GM10248 (cell line): ENCODE measurements at regions of chr3 and their contacts with region 1.

Region 1: DNA sequence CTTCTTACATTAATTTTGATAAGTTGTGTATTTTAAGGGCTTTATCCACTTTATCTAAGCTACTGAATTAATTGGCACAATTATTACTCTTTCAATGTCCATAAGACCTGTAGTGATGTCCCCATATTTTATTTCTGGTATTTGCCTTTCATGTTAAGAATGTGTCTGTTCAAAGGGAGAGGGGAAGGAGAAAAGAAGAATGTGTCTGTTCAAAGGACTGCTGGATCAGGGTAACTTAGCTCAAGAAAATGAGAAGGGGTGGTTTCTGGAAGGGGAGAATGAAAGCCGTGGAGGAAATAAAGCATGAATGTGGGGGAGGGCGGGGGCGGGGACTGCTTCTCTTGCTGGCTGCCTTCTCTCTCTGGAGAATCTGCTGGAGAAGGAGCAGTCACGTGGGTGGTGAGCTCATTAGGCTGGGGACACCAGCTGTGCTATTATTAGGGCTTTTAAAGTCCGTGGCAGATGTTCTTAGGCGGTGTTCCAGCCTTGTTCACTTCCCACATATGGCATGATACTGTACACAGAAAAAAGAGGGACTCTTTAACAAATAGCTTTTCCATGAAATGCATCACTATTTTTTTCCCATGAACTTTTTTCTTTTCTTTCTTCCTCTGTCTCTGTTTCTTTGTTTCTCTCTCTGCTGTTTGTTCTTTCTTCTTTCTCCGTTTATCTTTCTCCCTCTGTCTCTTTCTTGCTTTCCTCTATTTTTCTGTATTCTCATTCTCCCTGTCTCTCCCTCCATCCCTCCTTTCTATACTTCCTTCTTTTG is 63.7 kb upstream of the ULK4 start:
- DNase-seq: peak; percentile 55
- CTCF ChIP-seq: no peak

Region 2: GRCh38 chr3:42012935-42013690 is 12.4 kb before region 1 on chr3:
- CTCF ChIA-PET with region 1: interaction called, 14 read pairs
- POLR2A ChIA-PET with region 1: interaction called, 5 read pairs
- DNase-seq: peak; percentile 90
- CTCF ChIP-seq: peak; percentile 30

Region 3: GRCh38 chr3:42036483-42036823 is 10.9 kb after region 1 on chr3:
- CTCF ChIA-PET with region 1: interaction called, 14 read pairs
- POLR2A ChIA-PET with region 1: interaction called, 9 read pairs
- DNase-seq: no peak
- CTCF ChIP-seq: no peak